A673 (cell line): ENCODE measurements at regions of chr5 and their contacts with region 1.

Region 1: DNA sequence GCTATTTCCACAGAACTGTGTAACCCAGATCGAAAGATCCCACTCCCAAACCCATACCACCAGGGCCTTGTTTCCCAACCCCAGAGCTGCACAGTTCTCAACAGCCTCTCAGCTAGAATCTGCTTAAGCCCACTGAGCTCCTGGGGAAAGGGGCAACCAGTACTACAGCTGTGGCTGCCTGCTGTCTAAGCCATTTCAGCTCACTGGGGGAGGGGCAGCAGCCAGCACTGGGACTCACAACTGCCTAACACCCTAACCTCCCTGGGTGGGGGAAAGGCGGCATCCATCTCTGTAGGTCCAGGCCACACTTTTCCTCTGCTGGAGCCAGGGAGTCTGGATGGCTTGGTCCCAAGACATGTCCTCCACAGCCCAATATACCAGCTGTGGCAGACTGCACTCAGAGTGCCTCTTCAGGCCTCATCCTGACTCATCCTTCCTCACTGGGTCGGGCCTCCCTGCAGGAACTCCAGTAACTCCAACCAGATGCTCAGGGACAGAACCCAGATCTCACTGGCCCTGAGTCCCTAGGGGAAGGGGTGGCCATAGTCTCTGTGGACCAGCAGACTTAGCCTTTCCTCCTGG is 241.4 kb downstream of the HINT1 start:
- DNase-seq: peak; percentile 29
- H3K4me3 ChIP-seq: no peak overlapping the region
- H3K27ac ChIP-seq: no peak overlapping the region
- H3K4me1 ChIP-seq: no peaks in the 10 kb centered on the region
- H3K27me3 ChIP-seq: peaks cover 7% of the 10 kb centered on the region
- CTCF ChIP-seq: no peak

Region 2: DNA sequence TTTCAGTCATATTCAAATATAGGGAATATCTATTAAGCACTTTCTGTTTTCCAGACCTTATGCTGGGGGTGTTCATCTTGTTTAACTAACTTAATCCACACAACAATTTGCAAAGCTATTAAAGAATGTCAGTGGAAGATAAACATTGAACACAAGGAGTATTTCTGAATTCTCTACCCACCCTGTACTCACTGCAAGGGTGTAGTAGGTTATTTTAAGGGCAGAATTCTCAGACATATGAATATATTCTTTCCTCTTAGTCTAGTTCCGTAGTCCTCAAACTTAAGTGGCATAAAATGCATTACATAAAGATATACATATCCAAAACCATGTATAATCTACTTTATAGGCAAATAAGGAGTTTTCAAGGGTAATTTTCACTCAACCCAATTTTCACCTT is 1039.3 kb before region 1 on chr5:
- CTCF ChIA-PET with region 1: no interaction called
- POLR2A ChIA-PET with region 1: interaction called, 14 read pairs
- intact Hi-C with region 1: no loop called
- DNase-seq: no peak
- H3K4me3 ChIP-seq: no peak overlapping the region
- H3K27ac ChIP-seq: no peak overlapping the region
- H3K4me1 ChIP-seq: no peaks in the 10 kb centered on the region
- H3K27me3 ChIP-seq: no peaks in the 10 kb centered on the region
- CTCF ChIP-seq: no peak

Region 3: DNA sequence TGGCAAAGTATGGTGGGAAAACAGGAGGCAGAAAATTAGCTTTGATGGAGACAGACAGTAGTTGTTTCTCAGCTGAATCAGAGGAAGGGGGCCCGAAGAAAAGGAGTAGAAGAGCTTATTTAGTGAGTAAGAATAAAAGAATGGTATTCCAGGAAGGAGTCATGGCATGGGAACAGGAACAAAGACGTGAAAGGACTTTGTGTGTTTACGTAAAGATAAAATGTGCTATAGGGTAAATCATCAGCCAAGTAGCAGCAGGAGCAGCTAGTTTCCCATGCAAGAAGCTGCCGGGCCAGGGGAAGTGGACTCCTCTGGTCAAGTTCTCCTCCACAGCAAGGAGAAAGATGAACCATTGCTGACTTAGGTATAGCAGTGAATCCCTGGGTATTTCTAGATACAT is 213.0 kb before region 1 on chr5:
- CTCF ChIA-PET with region 1: no interaction called
- POLR2A ChIA-PET with region 1: no interaction called
- intact Hi-C with region 1: no loop called
- DNase-seq: no peak
- H3K4me3 ChIP-seq: no peak overlapping the region
- H3K27ac ChIP-seq: no peak overlapping the region
- H3K4me1 ChIP-seq: no peaks in the 10 kb centered on the region
- H3K27me3 ChIP-seq: no peaks in the 10 kb centered on the region
- CTCF ChIP-seq: no peak

Region 4: GRCh38 chr5:130893006-130893405 is 30.6 kb before region 1 on chr5:
- CTCF ChIA-PET with region 1: no interaction called
- POLR2A ChIA-PET with region 1: no interaction called
- intact Hi-C with region 1: no loop called
- DNase-seq: no peak
- H3K4me3 ChIP-seq: no peak overlapping the region
- H3K27ac ChIP-seq: no peak overlapping the region
- H3K4me1 ChIP-seq: no peaks in the 10 kb centered on the region
- H3K27me3 ChIP-seq: peaks cover 32% of the 10 kb centered on the region
- CTCF ChIP-seq: no peak

Region 5: DNA sequence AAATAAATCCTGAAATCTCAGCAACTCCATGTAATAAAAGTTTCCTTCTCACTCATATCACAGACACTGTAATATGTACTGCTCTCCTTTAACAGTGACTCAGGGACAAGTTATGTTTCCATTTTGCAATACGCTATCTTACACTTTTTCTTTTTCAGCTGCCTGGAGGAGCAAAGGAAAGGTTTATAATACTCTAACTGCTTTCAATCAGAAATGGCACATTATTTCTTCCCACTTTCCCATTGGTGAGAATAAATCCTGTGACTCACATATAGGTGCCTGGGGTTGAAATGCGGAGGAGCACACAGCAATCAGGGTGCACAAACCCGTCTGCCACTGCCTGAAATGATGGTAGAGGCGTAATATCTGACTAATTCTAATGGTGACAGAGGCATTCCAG is 54.8 kb after region 1 on chr5:
- CTCF ChIA-PET with region 1: no interaction called
- POLR2A ChIA-PET with region 1: no interaction called
- intact Hi-C with region 1: loop called (anchors 5 kb)
- DNase-seq: no peak
- H3K4me3 ChIP-seq: no peak overlapping the region
- H3K27ac ChIP-seq: no peak overlapping the region
- H3K4me1 ChIP-seq: no peaks in the 10 kb centered on the region
- H3K27me3 ChIP-seq: no peaks in the 10 kb centered on the region
- CTCF ChIP-seq: no peak